Activated CD4-positive, alpha-beta T cell treated with anti-CD3 and anti-CD28 coated beads for 36 hours (primary cell): ENCODE measurements at regions of chr19 and their contacts with region 1.

Region 1: GRCh38 chr19:19540715-19541440 is 2.8 kb downstream of the CILP2 start:
- DNase-seq: peak; percentile 93
- ATAC-seq: peak; percentile 94
- H3K4me3 Mint-ChIP-seq: peak overlapping the region; percentile 54
- H3K27ac Mint-ChIP-seq: no peak overlapping the region
- H3K4me1 Mint-ChIP-seq: peaks cover 29% of the 10 kb centered on the region
- H3K27me3 Mint-ChIP-seq: peaks cover 11% of the 10 kb centered on the region

Region 2: DNA sequence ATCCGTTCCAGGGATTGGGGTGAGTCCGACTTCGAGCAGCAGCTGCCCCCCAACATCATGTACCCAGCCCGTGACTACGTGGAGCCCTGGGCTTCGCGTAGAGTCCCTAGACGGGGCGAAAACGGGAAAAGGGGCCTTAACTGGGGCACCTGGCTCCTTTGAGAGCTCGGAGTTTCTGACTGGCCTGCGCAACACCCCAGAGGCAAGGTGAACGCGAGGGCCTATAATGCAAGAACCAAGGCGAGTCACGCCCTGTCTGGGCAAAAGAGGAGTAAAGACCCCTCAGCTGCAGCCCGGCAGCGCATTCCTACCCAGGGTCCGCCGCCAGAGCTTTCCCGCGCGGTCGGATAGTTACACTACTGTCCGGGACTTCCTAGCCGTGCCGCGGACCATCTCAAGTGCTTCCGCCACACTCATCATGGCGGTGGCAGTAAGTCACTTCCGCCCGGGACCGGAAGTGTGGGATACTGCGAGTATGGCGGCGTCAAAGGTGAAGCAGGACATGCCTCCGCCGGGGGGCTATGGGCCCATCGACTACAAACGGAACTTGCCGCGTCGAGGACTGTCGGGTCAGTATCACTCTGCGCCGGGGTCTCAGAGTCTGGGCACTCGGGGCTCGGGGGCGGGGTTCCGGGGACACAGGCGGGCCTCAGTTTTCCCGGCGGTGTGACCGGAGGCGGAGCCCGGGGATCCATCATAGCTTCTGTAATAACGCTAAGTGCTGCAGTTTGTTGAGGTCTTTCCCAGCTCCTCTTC is 24.9 kb before region 1 on chr19 and contains the start of gene NDUFA13:
- CTCF ChIA-PET with region 1: interaction called, 4 read pairs
- POLR2A ChIA-PET with region 1: interaction called, 4 read pairs
- intact Hi-C with region 1: loop called in 1 of 2 experiments (anchors 1 kb)
- DNase-seq: peak; percentile 95
- ATAC-seq: peak; percentile 94
- H3K4me3 Mint-ChIP-seq: peak within 1 kb of the TSS; percentile 83
- H3K27ac Mint-ChIP-seq: peak within 1 kb of the TSS; percentile 92
- H3K4me1 Mint-ChIP-seq: peaks cover 25% of the 10 kb centered on the region
- H3K27me3 Mint-ChIP-seq: no peaks in the 10 kb centered on the region
- total RNA-seq, gene NDUFA13: 310 to 323 TPM

Region 3: DNA sequence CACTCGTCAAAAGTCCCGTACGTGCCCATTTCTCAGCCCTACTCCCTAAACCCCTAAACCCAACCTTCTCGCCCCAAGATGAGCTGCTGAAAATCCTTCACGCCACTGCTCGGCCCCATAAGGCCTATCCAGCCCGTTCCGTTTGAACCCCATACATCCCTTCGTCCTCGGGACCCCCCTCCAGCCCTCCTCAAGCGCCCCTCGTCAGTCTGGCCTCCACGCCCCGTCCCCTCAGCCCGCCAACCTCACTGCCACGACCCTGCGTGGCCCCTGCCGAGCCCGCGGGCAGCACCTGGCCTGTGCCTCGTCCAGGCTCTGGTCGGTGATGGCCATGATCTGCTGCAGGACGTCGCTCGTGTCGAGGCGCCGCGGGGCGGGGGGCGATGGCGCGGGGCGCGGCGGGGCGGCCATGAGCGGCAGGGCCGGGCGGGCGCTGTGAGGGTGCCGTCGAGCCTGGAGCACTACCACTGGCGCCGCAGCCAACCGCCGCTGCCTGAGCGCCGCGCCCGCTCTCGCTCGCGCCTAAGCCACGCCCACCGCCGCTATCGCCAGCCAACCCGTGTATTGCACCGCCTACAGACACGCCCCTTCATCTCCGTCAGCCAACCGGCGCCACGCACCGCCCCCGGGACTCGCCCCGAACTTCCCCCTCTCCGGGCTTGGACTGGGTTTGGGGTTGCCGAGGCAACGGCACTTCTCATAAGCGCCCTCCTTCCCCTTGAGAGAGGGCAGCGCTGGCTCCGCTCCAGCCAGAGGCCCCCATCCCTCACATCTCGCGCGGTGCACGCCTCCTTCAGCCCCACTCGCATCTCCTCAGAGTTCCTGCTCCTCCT is 77.6 kb after region 1 on chr19 and contains the start of gene PBX4:
- CTCF ChIA-PET with region 1: no interaction called
- POLR2A ChIA-PET with region 1: no interaction called
- intact Hi-C with region 1: loop called in 1 of 2 experiments (anchors 2 kb)
- DNase-seq: peak; percentile 99
- ATAC-seq: peak; percentile 93
- H3K4me3 Mint-ChIP-seq: peak within 1 kb of the TSS; percentile 91
- H3K27ac Mint-ChIP-seq: peak within 1 kb of the TSS; percentile 90
- H3K4me1 Mint-ChIP-seq: peaks cover 46% of the 10 kb centered on the region
- H3K27me3 Mint-ChIP-seq: no peaks in the 10 kb centered on the region
- total RNA-seq, gene PBX4: 19.4 to 21.2 TPM

Region 4: GRCh38 chr19:19865739-19866481 is 325.0 kb after region 1 on chr19 and contains the start of gene ZNF253:
- CTCF ChIA-PET with region 1: no interaction called
- POLR2A ChIA-PET with region 1: interaction called, 11 read pairs
- intact Hi-C with region 1: no loop called
- DNase-seq: peak; percentile 98
- ATAC-seq: peak; percentile 93
- H3K4me3 Mint-ChIP-seq: peak within 1 kb of the TSS; percentile 88
- H3K27ac Mint-ChIP-seq: peak within 1 kb of the TSS; percentile 98
- H3K4me1 Mint-ChIP-seq: peaks cover 21% of the 10 kb centered on the region
- H3K27me3 Mint-ChIP-seq: no peaks in the 10 kb centered on the region
- total RNA-seq, gene ZNF253: 16.1 to 25.1 TPM